Right ventricle myocardium inferior (tissue), 1 donor: ENCODE measurements at regions of chr4 and their contacts with region 1.

Region 1: GRCh38 chr4:145773581-145774234 is 93.8 kb downstream of the C4orf51 start:
- DNase-seq: no peak
- ATAC-seq: peak; percentile 91

Region 2: DNA sequence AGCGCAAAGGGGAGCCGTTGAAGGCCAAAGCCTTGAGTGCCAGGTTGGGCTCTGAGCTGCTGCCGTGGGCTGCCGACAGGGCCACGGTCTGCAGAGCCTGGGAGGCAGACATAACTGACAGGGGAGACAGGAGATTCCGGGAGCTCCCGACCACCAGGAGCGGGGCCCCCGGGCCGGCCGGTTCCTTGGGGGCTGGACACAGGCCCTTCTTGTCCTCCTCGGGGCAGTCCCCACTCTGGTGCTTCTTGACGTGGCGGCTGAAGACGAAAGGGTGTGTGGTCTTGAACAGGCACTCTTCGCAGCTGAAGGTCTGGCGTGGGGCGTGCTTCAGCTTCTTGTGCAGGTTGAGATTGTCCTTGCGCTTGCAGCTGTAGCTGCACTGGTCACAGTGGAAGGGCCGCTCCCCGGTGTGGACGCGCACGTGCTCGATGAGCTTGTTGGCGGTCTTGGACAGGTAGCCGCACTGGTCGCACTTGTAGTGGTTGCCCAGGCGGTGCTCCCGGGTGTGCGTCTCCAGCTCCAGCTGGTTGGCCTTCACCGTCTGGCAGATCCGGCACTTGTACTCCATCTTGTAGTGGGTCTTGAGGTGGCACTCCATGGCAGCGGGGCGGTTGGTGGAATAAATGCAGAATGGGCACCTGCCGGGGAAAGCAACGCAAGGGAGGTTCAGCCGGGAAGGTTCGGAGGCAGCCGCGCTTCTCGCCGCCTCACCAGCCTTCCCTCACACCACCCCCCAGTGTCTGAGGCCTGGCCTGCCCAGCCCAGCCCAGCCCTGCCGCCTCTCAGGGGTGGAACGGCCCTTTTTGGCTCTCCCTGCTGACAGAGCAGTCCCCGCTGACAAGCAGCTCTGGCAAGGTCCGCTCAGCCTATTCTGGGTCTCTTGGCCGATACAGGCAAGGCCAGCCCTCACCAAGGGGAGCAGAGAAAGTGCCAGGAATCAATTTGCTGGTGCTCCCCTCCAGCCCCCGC is 12.5 kb before region 1 on chr4:
- intact Hi-C with region 1: loop called (anchors 2 kb)
- DNase-seq: peak; percentile 76
- ATAC-seq: peak; percentile 97